Transverse colon (tissue), 4 donors: ENCODE measurements at regions of chr10 and their contacts with region 1.

Region 1: DNA sequence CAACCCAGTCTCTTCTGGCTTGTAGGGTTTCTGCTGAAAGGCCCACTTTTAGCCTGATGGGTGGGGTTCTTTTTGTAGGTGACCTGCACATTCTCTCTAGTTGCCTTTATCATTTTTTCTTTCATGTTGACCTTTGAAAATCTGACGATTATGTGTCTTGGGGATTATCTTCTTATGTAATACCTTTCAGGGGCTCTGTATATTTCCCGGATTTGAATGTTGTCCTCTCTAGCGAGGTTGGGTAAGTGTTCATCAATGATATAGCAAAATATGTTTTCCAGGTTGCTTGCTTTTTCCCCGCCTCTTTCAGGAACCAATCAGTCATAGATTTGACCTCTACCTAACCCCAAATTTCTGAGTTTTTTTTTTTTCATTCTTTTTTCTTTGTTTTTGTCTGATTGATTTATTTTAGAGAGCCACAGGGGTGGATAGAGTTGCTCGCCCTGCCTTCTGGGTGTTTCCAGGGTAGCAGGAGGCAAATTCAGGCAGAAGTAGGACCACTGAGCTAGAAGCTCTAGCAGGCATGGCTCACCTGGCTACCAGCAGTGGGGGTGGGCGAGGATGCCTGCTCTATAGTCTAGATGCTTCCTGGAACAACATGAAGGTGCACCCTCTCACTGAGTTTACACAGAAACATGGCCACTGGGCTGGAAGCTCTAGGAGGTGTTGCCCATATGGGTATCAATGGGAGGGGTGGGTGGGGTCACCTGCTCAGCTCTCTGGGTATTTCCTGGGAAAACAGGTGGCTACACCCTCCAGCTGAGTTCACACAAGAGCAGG is 94.9 kb downstream of the CCDC7 start:
- DNase-seq: no peak
- H3K4me3 ChIP-seq: no peak overlapping the region
- H3K27ac ChIP-seq: no peak overlapping the region
- H3K4me1 ChIP-seq: no peaks in the 10 kb centered on the region
- H3K27me3 ChIP-seq: no peaks in the 10 kb centered on the region
- CTCF ChIP-seq: no peak
- EP300 ChIP-seq: no peak
- POLR2A ChIP-seq: no peak

Region 2: GRCh38 chr10:32367793-32368453 is 173.0 kb before region 1 on chr10:
- in situ Hi-C with region 1: no loop called
- intact Hi-C with region 1: no loop called
- DNase-seq: peak; percentile 84
- H3K4me3 ChIP-seq: peak overlapping the region in 1 of 4 donors; percentile 9
- H3K27ac ChIP-seq: peak overlapping the region in 2 of 4 donors; percentile 18 to 46
- H3K4me1 ChIP-seq: peaks cover under 1 to 61% (median 21%) of the 10 kb centered on the region in 4 donors
- H3K27me3 ChIP-seq: no peaks in the 10 kb centered on the region
- CTCF ChIP-seq: peak; percentile 78 to 84 (median 80)
- EP300 ChIP-seq: no peak
- POLR2A ChIP-seq: no peak

Region 3: DNA sequence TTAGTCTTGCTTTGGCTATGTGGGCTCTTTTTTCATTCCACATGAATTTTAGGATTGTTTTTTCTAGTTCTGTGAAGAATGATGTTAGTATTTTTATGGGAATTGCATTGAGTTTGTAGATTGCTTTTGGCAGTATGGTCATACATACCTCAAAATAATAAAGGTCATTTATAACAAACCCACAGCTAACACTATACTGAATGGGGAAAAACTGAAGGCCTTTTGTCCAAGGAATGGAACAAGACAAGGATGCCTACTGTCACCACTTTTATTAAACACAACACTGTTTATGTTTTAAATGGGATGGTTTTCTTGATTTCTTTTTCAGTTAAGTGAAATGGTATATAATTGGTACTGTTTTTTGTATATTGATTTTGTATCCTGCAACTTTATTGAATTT is 10.7 kb before region 1 on chr10:
- in situ Hi-C with region 1: no loop called
- intact Hi-C with region 1: loop called (anchors 1 kb)
- DNase-seq: no peak
- H3K4me3 ChIP-seq: no peak overlapping the region
- H3K27ac ChIP-seq: no peak overlapping the region
- H3K4me1 ChIP-seq: no peaks in the 10 kb centered on the region
- H3K27me3 ChIP-seq: no peaks in the 10 kb centered on the region
- CTCF ChIP-seq: no peak
- EP300 ChIP-seq: no peak
- POLR2A ChIP-seq: no peak

Region 4: DNA sequence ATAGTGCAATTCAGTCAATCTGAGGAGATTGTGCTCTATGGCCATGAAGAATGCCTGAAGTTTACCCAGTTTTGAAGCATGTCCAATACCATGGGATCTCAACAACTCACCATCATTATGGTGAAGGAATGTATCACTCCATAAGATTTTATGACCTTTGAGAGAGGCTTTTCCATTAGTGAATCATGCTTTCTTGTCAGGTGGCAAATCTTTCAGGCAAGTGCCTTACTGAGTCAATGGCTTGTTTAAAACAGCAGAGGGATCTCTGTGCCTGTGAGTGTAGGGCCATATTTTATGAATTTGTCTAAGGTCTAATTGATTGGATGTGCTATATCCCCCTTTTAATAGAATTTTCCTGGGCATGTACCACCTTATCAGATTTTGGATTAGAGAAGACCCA is 36.6 kb after region 1 on chr10:
- in situ Hi-C with region 1: no loop called
- intact Hi-C with region 1: no loop called
- DNase-seq: no peak
- H3K4me3 ChIP-seq: no peak overlapping the region
- H3K27ac ChIP-seq: no peak overlapping the region
- H3K4me1 ChIP-seq: no peaks in the 10 kb centered on the region
- H3K27me3 ChIP-seq: no peaks in the 10 kb centered on the region
- CTCF ChIP-seq: no peak
- EP300 ChIP-seq: no peak
- POLR2A ChIP-seq: no peak